ENCODE measurements at regions of chr2 and their contacts with region 1.

Region 1: GRCh38 chr2:36966370-36967235 is at the start of gene STRN:
- DNase-seq: peak; percentile 96 to 99 (median 99)
- ATAC-seq: peak; percentile 97
- H3K4me3 ChIP-seq: peak within 1 kb of the TSS; percentile 89
- H3K4me3 Mint-ChIP-seq: peak within 1 kb of the TSS; percentile 92 to 99 (median 98)
- H3K27ac ChIP-seq: peak within 1 kb of the TSS; percentile 90
- H3K27ac Mint-ChIP-seq: peak within 1 kb of the TSS; percentile 96 to 100 (median 98)
- H3K4me1 ChIP-seq: peaks cover 8 to 19% of the 10 kb centered on the region in 2 donors
- H3K4me1 Mint-ChIP-seq: peaks cover 35 to 57% (median 48%) of the 10 kb centered on the region in 7 donors
- H3K27me3 ChIP-seq: no peaks in the 10 kb centered on the region
- H3K27me3 Mint-ChIP-seq: no peaks in the 10 kb centered on the region
- total RNA-seq, gene STRN: 23.0 to 35.0 (median 30.9) TPM

Region 2: GRCh38 chr2:36982467-36982866 is 15.9 kb after region 1 on chr2:
- CTCF ChIA-PET with region 1: no interaction called
- POLR2A ChIA-PET with region 1: interaction called, 12 read pairs
- intact Hi-C with region 1: loop called in 1 of 2 experiments (anchors 2 kb)
- DNase-seq: no peak
- ATAC-seq: no peak
- H3K4me3 ChIP-seq: no peak overlapping the region
- H3K4me3 Mint-ChIP-seq: no peak overlapping the region
- H3K27ac ChIP-seq: no peak overlapping the region
- H3K27ac Mint-ChIP-seq: peak overlapping the region in 3 of 9 donors; percentile 1 to 27 (median 1)
- H3K4me1 ChIP-seq: no peaks in the 10 kb centered on the region
- H3K4me1 Mint-ChIP-seq: no peaks in the 10 kb centered on the region
- H3K27me3 ChIP-seq: no peaks in the 10 kb centered on the region
- H3K27me3 Mint-ChIP-seq: no peaks in the 10 kb centered on the region

Region 3: DNA sequence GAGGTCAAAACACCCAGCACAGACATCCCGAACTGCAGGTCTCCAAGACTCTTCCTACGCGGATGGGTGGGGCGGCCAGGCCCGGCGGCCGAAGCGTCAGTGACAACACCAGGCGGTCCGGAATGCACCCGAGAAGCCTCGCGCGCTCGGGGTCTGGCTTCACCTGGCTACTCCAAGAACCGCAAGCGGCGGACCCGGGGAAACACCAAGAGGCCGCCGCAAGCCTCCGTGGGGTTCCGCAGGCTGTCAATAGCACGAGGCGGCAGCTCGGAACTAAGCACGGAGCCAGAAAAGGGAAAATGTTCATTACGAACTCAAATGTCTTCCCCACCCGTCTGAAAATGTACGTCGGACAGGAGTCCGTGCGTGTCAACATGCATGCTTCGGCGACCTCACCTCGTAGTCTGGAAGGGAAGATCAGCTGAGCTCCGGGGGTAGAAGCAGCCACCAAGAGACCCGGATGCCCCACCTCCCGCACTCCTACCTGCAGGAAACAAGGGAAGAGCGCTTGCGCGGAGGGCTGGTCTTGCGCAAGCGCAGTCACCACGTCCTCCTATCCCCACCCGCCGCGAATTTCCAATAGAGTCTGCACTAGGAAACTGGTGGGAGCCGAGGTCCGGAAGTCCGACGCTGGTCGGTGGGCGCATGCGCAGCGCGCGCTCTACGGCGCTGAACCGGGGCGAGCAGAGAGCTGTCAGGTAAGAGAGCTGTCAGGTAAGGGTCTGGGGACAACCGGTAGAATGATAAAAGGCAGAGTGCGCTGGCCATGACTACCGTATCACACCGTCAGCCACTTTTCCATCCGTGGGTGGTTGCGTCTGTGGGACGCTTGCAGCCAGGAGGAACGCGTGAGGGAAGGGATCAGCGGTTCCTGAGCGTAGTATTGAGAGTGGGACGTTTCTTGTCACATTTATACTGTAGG is 117.5 kb after region 1 on chr2 and contains the starts of genes GPATCH11 and HEATR5B:
- CTCF ChIA-PET with region 1: no interaction called
- POLR2A ChIA-PET with region 1: interaction called, 4 read pairs
- intact Hi-C with region 1: loop called (anchors 1 kb)
- DNase-seq: peak; percentile 76 to 94 (median 92)
- ATAC-seq: peak; percentile 87
- H3K4me3 ChIP-seq: peak within 1 kb of the TSS; percentile 74
- H3K4me3 Mint-ChIP-seq: peak within 1 kb of the TSS in 1 of 10 donors; percentile 64
- H3K27ac ChIP-seq: peak within 1 kb of the TSS; percentile 85
- H3K27ac Mint-ChIP-seq: no peak within 1 kb of the TSS
- H3K4me1 ChIP-seq: peaks cover 35 to 45% of the 10 kb centered on the region in 2 donors
- H3K4me1 Mint-ChIP-seq: peaks cover 8 to 62% (median 50%) of the 10 kb centered on the region in 7 donors
- H3K27me3 ChIP-seq: no peaks in the 10 kb centered on the region
- H3K27me3 Mint-ChIP-seq: no peaks in the 10 kb centered on the region
- total RNA-seq, gene GPATCH11: 6.0 to 19.0 (median 11.1) TPM
- total RNA-seq, gene HEATR5B: 25.2 to 50.5 (median 39.3) TPM

Region 4: GRCh38 chr2:37196320-37197195 is 230.0 kb after region 1 on chr2 and contains the start of gene CEBPZOS:
- CTCF ChIA-PET with region 1: no interaction called
- POLR2A ChIA-PET with region 1: no interaction called
- intact Hi-C with region 1: loop called (anchors 1 to 2 kb)
- DNase-seq: peak; percentile 82 to 91 (median 88)
- ATAC-seq: peak; percentile 92
- H3K4me3 ChIP-seq: peak within 1 kb of the TSS; percentile 90
- H3K4me3 Mint-ChIP-seq: peak within 1 kb of the TSS; percentile 93 to 100 (median 99)
- H3K27ac ChIP-seq: peak within 1 kb of the TSS; percentile 82
- H3K27ac Mint-ChIP-seq: peak within 1 kb of the TSS; percentile 93 to 99 (median 99)
- H3K4me1 ChIP-seq: peaks cover 10 to 15% of the 10 kb centered on the region in 2 donors
- H3K4me1 Mint-ChIP-seq: peaks cover 14 to 47% (median 34%) of the 10 kb centered on the region in 7 donors
- H3K27me3 ChIP-seq: no peaks in the 10 kb centered on the region
- H3K27me3 Mint-ChIP-seq: peaks cover 0 to 5% (median 0%) of the 10 kb centered on the region in 5 donors
- total RNA-seq, gene CEBPZOS: 26.9 to 40.7 (median 40.4) TPM

Region 5: GRCh38 chr2:37324786-37325624 is 358.4 kb after region 1 on chr2 and contains the start of gene PRKD3:
- CTCF ChIA-PET with region 1: no interaction called
- POLR2A ChIA-PET with region 1: no interaction called
- intact Hi-C with region 1: loop called in 1 of 2 experiments (anchors 1 kb)
- DNase-seq: peak; percentile 46 to 72 (median 65)
- ATAC-seq: peak; percentile 88
- H3K4me3 ChIP-seq: peak within 1 kb of the TSS; percentile 75
- H3K4me3 Mint-ChIP-seq: peak within 1 kb of the TSS; percentile 95 to 99 (median 98)
- H3K27ac ChIP-seq: peak within 1 kb of the TSS; percentile 73
- H3K27ac Mint-ChIP-seq: peak within 1 kb of the TSS; percentile 92 to 98 (median 95)
- H3K4me1 ChIP-seq: peaks cover 30 to 31% of the 10 kb centered on the region in 2 donors
- H3K4me1 Mint-ChIP-seq: peaks cover 18 to 48% (median 36%) of the 10 kb centered on the region in 7 donors
- H3K27me3 ChIP-seq: no peaks in the 10 kb centered on the region
- H3K27me3 Mint-ChIP-seq: peaks cover 0 to 56% (median 21%) of the 10 kb centered on the region in 5 donors
- total RNA-seq, gene PRKD3: 12.8 to 47.3 (median 46.4) TPM

Region 6: DNA sequence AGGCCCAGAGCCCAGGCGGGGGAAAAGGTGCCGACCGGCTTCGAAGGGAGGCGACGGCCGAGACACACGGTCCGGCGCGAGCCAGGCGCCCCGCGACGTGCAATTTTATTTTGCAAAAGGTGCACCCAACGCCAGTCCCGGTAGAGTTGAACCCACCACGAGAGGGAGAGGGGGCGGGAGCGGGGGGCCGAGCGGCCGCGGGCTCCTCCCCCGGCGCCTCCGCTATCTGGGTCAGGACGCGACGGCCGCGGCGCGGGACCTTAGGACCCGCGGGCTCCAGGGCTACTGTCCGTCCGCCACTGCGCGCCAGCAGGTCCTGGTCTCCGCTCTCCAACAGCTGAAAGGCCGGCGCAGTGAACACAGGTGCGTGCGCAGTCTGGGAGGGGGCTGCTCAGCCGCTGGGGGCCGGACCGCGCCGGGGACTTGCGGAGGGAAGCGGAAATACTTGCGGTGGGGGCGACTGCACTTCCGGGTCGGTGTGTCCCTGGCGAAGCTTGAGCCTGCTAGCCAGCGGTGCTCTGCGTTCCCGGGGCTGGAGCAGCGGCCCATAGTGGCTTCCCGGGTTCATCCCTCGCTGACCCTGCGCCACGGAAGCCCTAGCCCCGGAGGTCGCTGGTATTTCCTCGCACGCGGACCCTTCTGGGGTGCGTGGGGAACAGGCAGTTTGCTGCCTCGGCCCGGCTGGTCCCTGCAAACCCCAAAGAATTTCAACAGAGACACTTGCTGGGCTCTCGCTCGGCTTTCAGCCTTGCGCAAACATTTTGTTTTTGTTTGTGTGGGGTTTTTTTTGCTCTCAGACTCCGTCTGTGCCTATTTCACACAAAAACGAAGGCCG is 958.7 kb after region 1 on chr2 and contains the start of gene RMDN2:
- CTCF ChIA-PET with region 1: no interaction called
- POLR2A ChIA-PET with region 1: interaction called, 4 read pairs
- intact Hi-C with region 1: loop called in 1 of 2 experiments (anchors 5 kb)
- DNase-seq: peak; percentile 57 to 78 (median 71)
- ATAC-seq: peak; percentile 88
- H3K4me3 ChIP-seq: peak within 1 kb of the TSS; percentile 81
- H3K4me3 Mint-ChIP-seq: peak within 1 kb of the TSS; percentile 89 to 100 (median 98)
- H3K27ac ChIP-seq: peak within 1 kb of the TSS; percentile 73
- H3K27ac Mint-ChIP-seq: peak within 1 kb of the TSS; percentile 67 to 100 (median 96)
- H3K4me1 ChIP-seq: peaks cover 0 to 8% of the 10 kb centered on the region in 2 donors
- H3K4me1 Mint-ChIP-seq: peaks cover 8 to 50% (median 24%) of the 10 kb centered on the region in 7 donors
- H3K27me3 ChIP-seq: no peaks in the 10 kb centered on the region
- H3K27me3 Mint-ChIP-seq: peaks cover 0 to 60% (median 0%) of the 10 kb centered on the region in 5 donors
- total RNA-seq, gene RMDN2: 0.39 to 8.1 (median 5.1) TPM

Region 7: DNA sequence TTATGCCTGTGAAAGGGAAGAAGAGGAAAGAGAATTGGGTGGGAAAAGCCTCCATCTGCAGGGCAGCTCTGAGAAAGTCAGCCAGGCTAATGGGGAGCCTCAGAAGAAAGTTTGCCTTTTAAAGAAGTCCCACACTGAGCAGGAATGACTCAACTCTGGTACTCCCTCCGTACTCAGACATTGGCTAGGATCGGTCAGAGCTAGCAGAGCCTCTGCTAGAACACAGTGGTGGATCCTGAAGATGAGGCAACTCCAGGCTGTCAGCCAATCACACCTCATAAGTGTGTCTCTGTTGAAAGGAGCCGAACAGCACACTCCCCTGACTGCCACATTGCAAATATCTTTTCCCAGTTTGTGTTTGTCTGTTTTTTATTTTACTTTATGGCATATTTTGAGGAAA is 1539.2 kb after region 1 on chr2:
- CTCF ChIA-PET with region 1: no interaction called
- POLR2A ChIA-PET with region 1: no interaction called
- intact Hi-C with region 1: no loop called
- DNase-seq: no peak
- ATAC-seq: no peak
- H3K4me3 ChIP-seq: no peak overlapping the region
- H3K4me3 Mint-ChIP-seq: no peak overlapping the region
- H3K27ac ChIP-seq: no peak overlapping the region
- H3K27ac Mint-ChIP-seq: no peak overlapping the region
- H3K4me1 ChIP-seq: no peaks in the 10 kb centered on the region
- H3K4me1 Mint-ChIP-seq: peaks cover 0 to 19% (median 0%) of the 10 kb centered on the region in 7 donors
- H3K27me3 ChIP-seq: no peaks in the 10 kb centered on the region
- H3K27me3 Mint-ChIP-seq: peaks cover 4 to 28% (median 10%) of the 10 kb centered on the region in 5 donors

Region 8: GRCh38 chr2:38778687-38779082 is 1812.1 kb after region 1 on chr2:
- CTCF ChIA-PET with region 1: no interaction called
- POLR2A ChIA-PET with region 1: no interaction called
- intact Hi-C with region 1: loop called in 1 of 2 experiments (anchors 1 kb)
- DNase-seq: no peak
- ATAC-seq: no peak
- H3K4me3 ChIP-seq: peak overlapping the region; percentile 85
- H3K4me3 Mint-ChIP-seq: peak overlapping the region; percentile 94 to 100 (median 98)
- H3K27ac ChIP-seq: peak overlapping the region; percentile 81
- H3K27ac Mint-ChIP-seq: peak overlapping the region; percentile 92 to 99 (median 97)
- H3K4me1 ChIP-seq: peaks cover 0 to 5% of the 10 kb centered on the region in 2 donors
- H3K4me1 Mint-ChIP-seq: peaks cover 8 to 23% (median 17%) of the 10 kb centered on the region in 7 donors
- H3K27me3 ChIP-seq: no peaks in the 10 kb centered on the region
- H3K27me3 Mint-ChIP-seq: peaks cover 5 to 21% (median 17%) of the 10 kb centered on the region in 5 donors